Spleen (tissue), 13 donors: ENCODE measurements at regions of chr10 and their contacts with region 1.

Region 1: DNA sequence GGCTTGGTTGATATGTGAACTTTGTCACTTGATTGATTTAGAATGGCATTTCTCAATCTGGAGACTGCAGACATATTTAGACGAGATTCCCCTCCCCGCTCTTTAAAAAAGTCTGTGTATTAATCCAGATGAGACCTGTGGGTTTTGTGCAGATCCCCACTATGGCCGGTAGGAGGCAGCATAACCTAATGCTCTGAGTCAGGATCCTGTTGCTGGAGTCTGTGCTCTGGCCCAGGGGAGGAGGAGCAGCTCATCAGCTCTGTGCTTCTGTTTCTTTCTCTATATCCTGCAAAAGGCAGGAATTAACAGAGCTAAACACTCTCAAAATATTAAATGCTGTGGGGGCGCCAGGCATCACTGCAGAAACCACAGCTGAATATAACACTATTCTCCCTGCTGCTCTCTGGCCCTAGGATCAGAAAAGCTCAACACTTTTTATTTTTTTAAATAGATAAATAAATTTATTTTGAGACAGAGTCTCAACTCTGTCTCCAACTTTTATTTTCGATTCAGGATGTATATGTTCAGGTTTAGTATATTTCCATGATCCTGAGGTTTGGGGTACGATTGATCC is 23.9 kb upstream of the SEPHS1 start:
- DNase-seq: peak; percentile 79
- H3K4me3 ChIP-seq: no peak overlapping the region
- H3K27ac ChIP-seq: no peak overlapping the region
- H3K4me1 ChIP-seq: peaks cover 0 to 6% (median 0%) of the 10 kb centered on the region in 6 donors
- H3K27me3 ChIP-seq: no peaks in the 10 kb centered on the region
- CTCF ChIP-seq: peak; percentile 79 to 93 (median 87)
- POLR2A ChIP-seq: no peak

Region 2: GRCh38 chr10:13440185-13441061 is 68.4 kb after region 1 on chr10:
- intact Hi-C with region 1: loop called (anchors 5 kb)
- DNase-seq: peak; percentile 89
- H3K4me3 ChIP-seq: peak overlapping the region in 7 of 8 donors; percentile 11 to 63 (median 31)
- H3K27ac ChIP-seq: no peak overlapping the region
- H3K4me1 ChIP-seq: peaks cover 7 to 20% (median 14%) of the 10 kb centered on the region in 6 donors
- H3K27me3 ChIP-seq: peaks cover 3 to 62% (median 32%) of the 10 kb centered on the region in 7 donors
- CTCF ChIP-seq: peak; percentile 34 to 89 (median 86)
- POLR2A ChIP-seq: no peak

Region 3: DNA sequence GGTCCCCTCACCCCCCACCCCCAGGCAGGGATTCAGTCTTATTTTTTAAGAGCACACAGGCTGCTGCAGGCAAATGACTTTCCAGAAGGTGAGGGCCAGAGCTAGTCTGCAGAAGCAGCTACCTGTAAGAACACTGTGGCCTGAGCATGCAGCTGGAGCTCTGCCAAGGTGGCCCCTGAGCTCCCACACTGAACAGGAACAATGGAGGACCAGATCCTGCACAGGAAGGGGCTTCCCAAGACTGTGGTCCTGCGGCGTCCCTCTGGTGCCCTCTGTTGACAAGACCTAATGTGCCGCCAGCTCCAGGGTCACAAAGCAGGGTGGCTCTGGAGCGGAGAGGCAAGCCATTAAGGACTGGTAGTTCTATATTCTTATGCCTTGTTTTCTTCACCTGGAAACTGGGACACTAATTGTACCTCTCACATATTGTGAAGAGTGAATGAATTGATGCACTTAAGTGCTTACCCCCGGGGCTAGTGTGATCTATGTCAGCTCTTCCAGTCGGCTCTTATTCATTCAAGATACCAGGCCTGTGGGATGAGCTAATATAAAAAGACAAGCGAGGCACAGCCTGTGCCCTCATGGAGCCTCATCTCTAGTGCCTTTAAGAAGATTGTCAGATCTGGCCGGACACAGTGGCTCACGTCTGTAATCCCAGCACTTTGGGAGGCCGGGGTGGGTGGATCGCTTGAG is 164.8 kb after region 1 on chr10:
- intact Hi-C with region 1: loop called (anchors 5 kb)
- DNase-seq: peak; percentile 80
- H3K4me3 ChIP-seq: no peak overlapping the region
- H3K27ac ChIP-seq: no peak overlapping the region
- H3K4me1 ChIP-seq: peaks cover 0 to 5% (median 0%) of the 10 kb centered on the region in 6 donors
- H3K27me3 ChIP-seq: peaks cover 0 to 56% (median 9%) of the 10 kb centered on the region in 7 donors
- CTCF ChIP-seq: peak in 9 of 11 experiments; percentile 4 to 65 (median 51)
- POLR2A ChIP-seq: no peak

Region 4: GRCh38 chr10:13586676-13587355 is 214.8 kb after region 1 on chr10 and contains the start of gene PRPF18:
- intact Hi-C with region 1: loop called (anchors 5 kb)
- DNase-seq: peak; percentile 99
- H3K4me3 ChIP-seq: peak within 1 kb of the TSS; percentile 57 to 98 (median 83)
- H3K27ac ChIP-seq: peak within 1 kb of the TSS; percentile 1 to 86 (median 64)
- H3K4me1 ChIP-seq: peaks cover 9 to 45% (median 23%) of the 10 kb centered on the region in 6 donors
- H3K27me3 ChIP-seq: peaks cover 0 to 35% (median 0%) of the 10 kb centered on the region in 7 donors
- CTCF ChIP-seq: peak; percentile 62 to 98 (median 94)
- POLR2A ChIP-seq: no peak
- total RNA-seq, gene PRPF18: 19.3 to 41.7 (median 27.8) TPM